Head of caudate nucleus (tissue), 42 donors: ENCODE measurements at regions of chr2 and their contacts with region 1.

Region 1: GRCh38 chr2:216683846-216684507 is 11.4 kb downstream of the IGFBP5 start:
- DNase-seq: no peak

Region 2: GRCh38 chr2:217510771-217511291 is 826.9 kb after region 1 on chr2:
- intact Hi-C with region 1: loop called (anchors 5 kb)
- DNase-seq: peak in 40 of 42 donors; percentile 3 to 89 (median 64)